Activated CD4-positive, alpha-beta memory T cell treated with anti-CD3 and anti-CD28 coated beads for 36 hours (primary cell): ENCODE measurements at regions of chr1 and their contacts with region 1.

Region 1: GRCh38 chr1:12124693-12125421 is 41.9 kb upstream of the TNFRSF1B start:
- DNase-seq: peak; percentile 86
- H3K4me3 Mint-ChIP-seq: no peak overlapping the region
- H3K27ac Mint-ChIP-seq: peak overlapping the region; percentile 42
- H3K4me1 Mint-ChIP-seq: peaks cover 52% of the 10 kb centered on the region
- H3K27me3 Mint-ChIP-seq: no peaks in the 10 kb centered on the region

Region 2: DNA sequence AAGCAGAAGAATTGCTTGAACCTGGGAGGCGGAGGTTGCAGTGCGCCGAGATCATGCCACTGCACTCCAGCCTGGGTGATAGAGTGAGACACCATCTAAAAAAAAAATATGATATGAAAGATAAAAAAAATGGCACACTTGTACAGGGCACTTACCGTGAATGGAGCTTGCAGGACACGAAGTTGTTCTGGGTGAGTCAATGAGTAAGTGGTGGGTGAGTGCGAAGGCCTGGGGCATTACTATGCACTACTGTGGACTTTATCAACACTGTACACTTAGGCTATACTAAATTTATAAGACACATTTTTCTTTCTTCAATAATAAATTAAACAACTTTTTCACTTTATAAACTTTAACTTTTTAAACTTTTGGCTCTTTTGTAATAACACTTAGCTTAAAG is 24.8 kb before region 1 on chr1:
- CTCF ChIA-PET with region 1: interaction called, 10 read pairs
- POLR2A ChIA-PET with region 1: no interaction called
- intact Hi-C with region 1: no loop called
- DNase-seq: no peak
- H3K4me3 Mint-ChIP-seq: no peak overlapping the region
- H3K27ac Mint-ChIP-seq: no peak overlapping the region
- H3K4me1 Mint-ChIP-seq: peaks cover 6% of the 10 kb centered on the region
- H3K27me3 Mint-ChIP-seq: no peaks in the 10 kb centered on the region

Region 3: GRCh38 chr1:12161662-12162458 is 37.0 kb after region 1 on chr1:
- CTCF ChIA-PET with region 1: interaction called, 29 read pairs
- POLR2A ChIA-PET with region 1: interaction called, 4 read pairs
- intact Hi-C with region 1: no loop called
- DNase-seq: peak; percentile 92
- H3K4me3 Mint-ChIP-seq: no peak overlapping the region
- H3K27ac Mint-ChIP-seq: peak overlapping the region; percentile 90
- H3K4me1 Mint-ChIP-seq: peaks cover 80% of the 10 kb centered on the region
- H3K27me3 Mint-ChIP-seq: no peaks in the 10 kb centered on the region

Region 4: GRCh38 chr1:12191242-12192032 is 66.6 kb after region 1 on chr1:
- CTCF ChIA-PET with region 1: interaction called, 168 read pairs
- POLR2A ChIA-PET with region 1: no interaction called
- intact Hi-C with region 1: no loop called
- DNase-seq: no peak
- H3K4me3 Mint-ChIP-seq: no peak overlapping the region
- H3K27ac Mint-ChIP-seq: no peak overlapping the region
- H3K4me1 Mint-ChIP-seq: peaks cover 38% of the 10 kb centered on the region
- H3K27me3 Mint-ChIP-seq: no peaks in the 10 kb centered on the region

Region 5: DNA sequence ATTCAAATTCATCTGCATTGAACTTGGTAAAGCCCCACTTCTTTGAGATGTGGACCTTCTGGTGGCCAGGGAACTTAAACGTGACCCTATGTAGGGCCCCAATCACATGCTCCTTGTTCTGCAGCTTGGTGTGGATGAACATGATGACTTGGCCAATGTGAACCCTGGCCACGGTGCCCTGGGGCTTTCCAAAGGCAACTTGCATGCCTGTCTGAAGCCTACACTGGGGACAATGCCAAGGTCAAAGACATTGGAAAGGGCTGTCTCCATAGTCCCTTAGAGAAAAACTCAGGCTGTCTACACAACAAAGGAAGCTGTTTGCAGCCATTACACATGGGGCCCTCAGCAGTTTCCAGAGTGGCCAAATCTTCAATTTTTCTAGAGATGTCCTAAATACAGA is 96.0 kb after region 1 on chr1:
- CTCF ChIA-PET with region 1: interaction called, 44 read pairs
- POLR2A ChIA-PET with region 1: no interaction called
- intact Hi-C with region 1: no loop called
- DNase-seq: no peak
- H3K4me3 Mint-ChIP-seq: no peak overlapping the region
- H3K27ac Mint-ChIP-seq: no peak overlapping the region
- H3K4me1 Mint-ChIP-seq: no peaks in the 10 kb centered on the region
- H3K27me3 Mint-ChIP-seq: no peaks in the 10 kb centered on the region

Region 6: DNA sequence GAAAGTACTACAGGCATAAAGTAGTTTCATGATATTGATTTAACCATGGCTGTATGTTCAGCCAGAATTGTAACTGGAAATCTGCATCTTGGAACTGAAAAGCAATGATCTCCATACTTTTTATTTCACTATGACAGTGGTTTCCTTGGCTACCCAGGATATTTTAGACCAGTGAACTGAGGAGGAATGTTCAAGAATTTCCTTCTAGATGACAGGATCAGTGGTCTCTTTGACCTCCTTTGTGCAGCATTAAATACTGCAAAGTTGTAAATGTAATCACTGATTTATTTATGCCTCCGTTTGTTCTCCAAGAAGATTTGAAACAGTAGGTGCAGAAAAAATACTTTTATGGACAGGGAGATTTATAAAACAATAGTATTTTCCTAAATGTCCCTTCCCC is 144.5 kb after region 1 on chr1:
- CTCF ChIA-PET with region 1: interaction called, 13 read pairs
- POLR2A ChIA-PET with region 1: no interaction called
- intact Hi-C with region 1: no loop called
- DNase-seq: no peak
- H3K4me3 Mint-ChIP-seq: no peak overlapping the region
- H3K27ac Mint-ChIP-seq: no peak overlapping the region
- H3K4me1 Mint-ChIP-seq: no peaks in the 10 kb centered on the region
- H3K27me3 Mint-ChIP-seq: no peaks in the 10 kb centered on the region